Prostate gland (tissue), 2 donors: ENCODE measurements at regions of chr10 and their contacts with region 1.

Region 1: GRCh38 chr10:9733756-9734155 is 1283.9 kb upstream of the CELF2 start:
- DNase-seq: no peak
- H3K4me3 ChIP-seq: no peak overlapping the region
- H3K27ac ChIP-seq: no peak overlapping the region
- H3K4me1 ChIP-seq: no peaks in the 10 kb centered on the region
- H3K27me3 ChIP-seq: no peaks in the 10 kb centered on the region
- CTCF ChIP-seq: no peak
- POLR2A ChIP-seq: no peak

Region 2: DNA sequence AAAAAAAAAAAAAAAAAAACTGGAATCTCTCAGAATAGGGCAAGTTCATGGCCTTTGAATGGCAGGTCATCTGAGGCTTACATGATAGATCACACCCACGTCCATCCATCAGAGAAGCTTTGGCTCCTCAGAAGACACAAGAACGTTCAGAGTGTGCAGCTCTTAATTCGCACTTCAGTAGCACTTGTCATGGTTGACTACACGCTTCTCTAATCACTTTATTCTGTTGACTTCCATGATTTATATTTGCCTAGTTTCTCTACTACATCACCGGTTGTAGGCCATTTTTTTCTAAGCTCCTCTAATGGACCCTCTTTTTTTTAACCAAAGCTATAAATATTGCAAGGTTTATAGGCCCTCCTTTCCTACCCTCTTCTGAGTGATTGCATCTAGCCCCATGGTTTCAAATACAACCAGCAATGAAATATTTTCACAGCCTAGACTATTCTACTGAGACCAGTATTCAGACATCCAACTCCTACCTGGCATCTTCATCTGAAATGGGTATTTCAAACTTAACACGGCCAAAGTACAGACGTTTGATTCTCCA is 978.5 kb after region 1 on chr10:
- intact Hi-C with region 1: no loop called
- DNase-seq: no peak
- H3K4me3 ChIP-seq: no peak overlapping the region
- H3K27ac ChIP-seq: no peak overlapping the region
- H3K4me1 ChIP-seq: no peaks in the 10 kb centered on the region
- H3K27me3 ChIP-seq: no peaks in the 10 kb centered on the region
- CTCF ChIP-seq: no peak
- POLR2A ChIP-seq: no peak

Region 3: DNA sequence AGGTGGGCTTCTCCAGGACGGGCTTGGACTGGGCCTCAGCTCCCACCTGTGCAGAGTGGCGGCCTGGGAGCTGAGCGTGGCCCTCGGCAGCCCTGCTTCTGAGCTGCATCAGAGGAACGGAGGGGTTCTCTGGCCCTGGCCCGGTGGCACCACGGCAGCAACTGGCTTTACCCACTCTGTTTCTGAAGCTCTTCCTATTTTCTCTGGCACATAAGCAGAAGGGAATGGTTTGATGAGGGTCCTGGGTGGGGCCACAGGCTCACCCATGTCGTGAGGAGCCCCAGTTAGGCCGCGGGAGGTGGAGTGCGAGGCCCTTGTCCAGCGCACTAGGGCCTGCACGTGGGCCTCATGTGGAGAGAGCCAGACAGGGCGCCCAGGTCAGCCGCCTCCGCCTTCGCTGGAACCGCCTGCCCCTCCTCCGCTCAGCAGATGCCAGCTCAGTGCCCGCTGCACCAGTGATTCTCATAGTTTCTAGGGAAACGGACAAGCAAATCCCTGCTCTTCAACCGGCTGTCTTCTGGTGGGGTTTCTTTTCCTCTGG is 1567.9 kb after region 1 on chr10:
- intact Hi-C with region 1: loop called (anchors 10 kb)
- DNase-seq: no peak
- H3K4me3 ChIP-seq: no peak overlapping the region
- H3K27ac ChIP-seq: no peak overlapping the region
- H3K4me1 ChIP-seq: no peaks in the 10 kb centered on the region
- H3K27me3 ChIP-seq: no peaks in the 10 kb centered on the region
- CTCF ChIP-seq: no peak
- POLR2A ChIP-seq: no peak